ENCODE measurements at regions of chr9 and their contacts with region 1.

Region 1: GRCh38 chr9:129796029-129796910 is 6.7 kb upstream of the TOR1B start:
- DNase-seq: no peak
- ATAC-seq: no peak
- H3K4me3 ChIP-seq: no peak overlapping the region
- H3K27ac ChIP-seq: no peak overlapping the region
- H3K4me1 ChIP-seq: no peaks in the 10 kb centered on the region
- H3K27me3 ChIP-seq: no peaks in the 10 kb centered on the region
- CTCF ChIP-seq: no peak
- POLR2A ChIP-seq: no peak

Region 2: GRCh38 chr9:129641746-129642513 is 154.3 kb before region 1 on chr9 and contains the start of gene ASB6:
- intact Hi-C with region 1: loop called (anchors 10 kb)
- DNase-seq: peak; percentile 97
- ATAC-seq: peak; percentile 93
- H3K4me3 ChIP-seq: peak within 1 kb of the TSS; percentile 44 to 92
- H3K27ac ChIP-seq: peak within 1 kb of the TSS; percentile 75 to 79 (median 77)
- H3K4me1 ChIP-seq: peaks cover 28% of the 10 kb centered on the region
- H3K27me3 ChIP-seq: no peaks in the 10 kb centered on the region
- CTCF ChIP-seq: peak; percentile 98 to 100 (median 100)
- POLR2A ChIP-seq: peak; percentile 48 to 79 (median 57)
- total RNA-seq, gene ASB6: 12.7 to 14.5 TPM

Measured in body of pancreas (tissue), 4 donors.